ENCODE measurements at regions of chr7 and their contacts with region 1.

Region 1: DNA sequence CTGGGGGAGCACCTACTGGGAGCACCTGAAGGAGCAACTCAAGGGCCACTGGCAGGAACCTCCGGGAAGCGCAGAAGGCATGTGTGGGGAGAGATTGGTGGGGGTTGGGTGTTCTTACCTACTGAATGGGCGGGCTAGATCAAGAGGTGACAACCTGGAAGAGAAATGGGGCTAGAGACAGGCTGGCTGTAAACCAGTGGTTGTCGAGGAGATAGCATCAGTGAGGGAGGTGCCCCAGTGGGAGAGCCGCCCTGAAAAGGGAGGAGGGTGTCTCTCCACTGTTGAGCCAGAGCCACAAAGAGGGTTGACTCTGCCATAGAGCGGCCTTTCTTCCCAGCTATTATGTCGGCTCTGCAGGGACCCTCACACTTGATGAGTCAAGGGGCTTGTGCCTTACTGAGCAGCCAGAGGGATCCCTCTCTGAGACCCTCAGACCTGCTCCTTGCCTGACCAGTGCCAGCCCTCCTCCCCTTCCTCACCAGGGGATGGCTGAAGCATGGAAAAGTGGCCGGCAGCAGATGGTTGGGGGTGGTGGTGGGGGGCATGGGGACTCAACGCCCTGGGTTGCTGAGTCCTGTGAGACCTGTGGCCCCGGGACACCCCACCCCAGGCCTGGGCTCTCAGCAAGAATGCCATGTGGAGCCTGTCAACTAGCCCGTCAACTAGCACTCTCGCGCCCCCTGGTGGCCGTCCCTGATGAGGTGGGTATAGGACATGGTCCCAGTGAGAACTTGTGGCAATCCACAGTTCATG is 36.5 kb upstream of the PURB start:
- DNase-seq: peak; percentile 95
- ATAC-seq: peak; percentile 97 to 98
- H3K4me3 ChIP-seq: no peak overlapping the region
- H3K27ac ChIP-seq: no peak overlapping the region
- H3K4me1 ChIP-seq: peaks cover 7% of the 10 kb centered on the region
- H3K27me3 ChIP-seq: no peaks in the 10 kb centered on the region
- CTCF ChIP-seq: peak; percentile 94

Region 2: DNA sequence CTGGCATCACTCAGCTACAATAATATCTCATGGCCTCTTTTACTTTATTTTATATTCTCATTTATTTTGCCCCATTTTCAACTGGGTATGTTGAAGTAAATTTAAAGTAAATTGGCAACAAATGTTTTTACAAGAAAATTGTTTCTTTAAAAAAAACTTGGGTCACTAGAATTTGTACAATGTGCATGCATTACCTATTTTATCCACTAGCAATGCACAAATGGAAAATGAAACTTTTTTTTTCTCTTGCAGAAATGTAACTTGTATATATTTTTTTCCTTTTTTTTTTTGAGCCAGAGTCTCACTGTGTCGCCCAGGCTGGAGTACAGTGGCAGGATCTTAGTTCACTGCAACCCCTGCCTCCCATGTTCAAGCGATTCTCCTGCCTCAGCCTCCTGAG is 63.6 kb before region 1 on chr7:
- intact Hi-C with region 1: loop called (anchors 5 kb)
- DNase-seq: no peak
- ATAC-seq: no peak
- H3K4me3 ChIP-seq: no peak overlapping the region
- H3K27ac ChIP-seq: no peak overlapping the region
- H3K4me1 ChIP-seq: no peaks in the 10 kb centered on the region
- H3K27me3 ChIP-seq: peaks cover 3% of the 10 kb centered on the region
- CTCF ChIP-seq: no peak